Calu3 (cell line): ENCODE measurements at regions of chr9 and their contacts with region 1.

Region 1: GRCh38 chr9:132538071-132538470 is 44.3 kb upstream of the BARHL1 start:
- DNase-seq: peak; percentile 88
- H3K4me3 Mint-ChIP-seq: peak overlapping the region; percentile 26
- H3K27ac Mint-ChIP-seq: peak overlapping the region; percentile 98
- H3K4me1 Mint-ChIP-seq: peaks cover 16% of the 10 kb centered on the region
- H3K27me3 Mint-ChIP-seq: no peaks in the 10 kb centered on the region
- CTCF ChIP-seq: no peak

Region 2: GRCh38 chr9:132548766-132549640 is 10.9 kb after region 1 on chr9:
- CTCF ChIA-PET with region 1: interaction called, 17 read pairs
- intact Hi-C with region 1: loop called (anchors 1 kb)
- DNase-seq: peak; percentile 70
- H3K4me3 Mint-ChIP-seq: peak overlapping the region; percentile 40
- H3K27ac Mint-ChIP-seq: peak overlapping the region; percentile 91
- H3K4me1 Mint-ChIP-seq: peaks cover 37% of the 10 kb centered on the region
- H3K27me3 Mint-ChIP-seq: no peaks in the 10 kb centered on the region
- CTCF ChIP-seq: no peak